ENCODE measurements at regions of chr19 and their contacts with region 1.

Region 1: DNA sequence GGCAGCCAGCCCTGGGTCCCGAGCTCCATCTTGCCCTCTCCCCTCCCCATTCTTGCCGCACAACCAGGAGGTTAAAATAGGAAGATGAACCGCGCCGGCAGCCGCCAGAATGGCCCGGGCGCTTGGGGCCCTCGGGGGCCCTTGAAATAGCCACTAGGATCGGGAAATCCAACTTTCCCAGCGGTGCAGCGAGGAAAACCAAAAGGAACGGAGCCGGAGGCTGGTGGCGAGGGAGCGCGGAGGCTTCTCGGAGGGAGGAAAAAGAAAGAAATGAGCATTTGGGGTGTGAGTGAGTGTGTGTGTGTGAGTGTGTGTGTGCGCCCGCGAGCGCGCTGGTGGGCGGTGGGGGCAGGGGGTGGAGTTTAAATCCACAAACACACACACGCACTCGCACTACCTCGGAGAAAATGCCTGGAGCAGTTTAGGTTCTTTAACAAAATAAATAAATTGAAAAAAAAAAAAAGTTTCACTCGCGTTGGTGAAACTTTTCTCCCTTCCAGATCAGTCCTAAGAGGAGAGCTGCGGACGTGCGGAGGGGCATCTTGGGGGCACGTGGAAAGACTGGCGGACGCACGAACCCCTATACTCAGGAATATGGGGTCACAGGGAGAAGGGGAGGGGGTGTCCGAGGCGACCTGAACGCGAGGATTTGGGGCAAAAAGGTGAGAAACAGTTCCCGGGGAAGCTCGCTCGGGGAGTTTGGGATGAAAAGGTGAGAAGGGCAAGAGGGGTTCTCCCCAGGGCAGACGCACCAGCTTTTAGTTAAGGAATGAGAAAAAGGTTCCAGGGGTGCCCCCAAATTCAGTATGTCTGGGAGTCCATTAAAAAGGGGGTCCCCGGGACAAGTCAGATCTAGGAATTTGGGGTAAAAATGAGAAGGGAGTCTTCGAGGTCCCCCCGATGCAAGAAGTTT is 1.3 kb downstream of the RFX2 start:
- DNase-seq: peak; percentile 63
- H3K4me3 ChIP-seq: peak overlapping the region; percentile 82
- H3K27ac ChIP-seq: peak overlapping the region; percentile 86
- H3K4me1 ChIP-seq: peaks cover 51% of the 10 kb centered on the region
- H3K27me3 ChIP-seq: no peaks in the 10 kb centered on the region
- CTCF ChIP-seq: no peak

Region 2: DNA sequence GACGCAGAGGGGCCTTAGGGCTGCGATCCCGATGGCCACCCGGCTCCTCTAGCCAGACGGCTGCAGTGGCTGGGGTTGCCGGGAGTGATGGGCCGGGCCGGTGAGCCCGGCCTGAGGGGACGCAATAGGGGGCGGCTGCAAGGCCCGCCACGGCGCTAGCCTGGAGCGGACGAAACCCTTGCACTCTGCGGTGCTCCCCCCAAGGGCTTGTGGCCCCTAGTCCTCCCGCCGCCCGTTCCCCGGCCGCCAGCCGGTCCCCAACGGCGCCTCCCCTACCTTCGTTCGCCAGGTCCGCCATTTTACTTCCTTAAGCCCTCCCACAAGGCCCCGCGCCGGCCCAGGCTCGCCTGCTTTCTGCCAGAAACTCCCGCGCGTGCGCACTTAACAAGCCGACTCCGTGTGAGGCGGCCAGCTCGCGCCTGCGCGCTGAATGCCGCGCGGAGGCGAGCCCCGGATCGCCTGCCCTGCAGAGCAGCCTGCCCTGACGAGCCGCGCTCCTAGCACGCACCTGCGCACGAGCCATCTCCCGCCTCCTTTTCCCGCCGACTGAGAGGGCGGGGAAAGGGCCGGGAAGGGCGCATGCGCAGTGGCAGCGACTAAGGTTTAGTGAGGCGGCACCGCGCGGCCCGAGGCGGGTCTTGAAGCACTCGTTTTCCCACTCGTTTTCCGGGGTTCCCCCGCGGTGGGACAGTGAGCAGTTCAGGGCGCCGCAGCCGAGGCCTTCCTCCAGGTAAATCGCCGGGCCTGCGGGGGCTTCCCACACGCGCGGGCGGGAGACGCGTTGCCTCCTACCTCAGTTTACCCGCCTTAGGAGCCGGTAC is 131.0 kb before region 1 on chr19 and contains the start of gene RANBP3:
- intact Hi-C with region 1: no loop called
- DNase-seq: peak; percentile 99
- H3K4me3 ChIP-seq: peak within 1 kb of the TSS; percentile 100
- H3K27ac ChIP-seq: peak within 1 kb of the TSS; percentile 95
- H3K4me1 ChIP-seq: peaks cover 60% of the 10 kb centered on the region
- H3K27me3 ChIP-seq: no peaks in the 10 kb centered on the region
- CTCF ChIP-seq: no peak
- total RNA-seq, gene RANBP3: 54.8 TPM

Region 3: GRCh38 chr19:6066661-6067646 is 42.0 kb before region 1 on chr19:
- intact Hi-C with region 1: loop called (anchors 5 kb)
- DNase-seq: peak; percentile 93
- H3K4me3 ChIP-seq: peak overlapping the region; percentile 28
- H3K27ac ChIP-seq: peak overlapping the region; percentile 85
- H3K4me1 ChIP-seq: peaks cover 70% of the 10 kb centered on the region
- H3K27me3 ChIP-seq: no peaks in the 10 kb centered on the region
- CTCF ChIP-seq: no peak

Measured in left ventricle myocardium inferior (tissue), 1 donor.